ENCODE measurements at regions of chr4 and their contacts with region 1.

Region 1: GRCh38 chr4:145234091-145234706 is 53.8 kb upstream of the OTUD4 start:
- DNase-seq: peak; percentile 58
- H3K4me3 ChIP-seq: no peak overlapping the region
- H3K27ac ChIP-seq: no peak overlapping the region
- H3K4me1 ChIP-seq: no peaks in the 10 kb centered on the region
- H3K27me3 ChIP-seq: no peaks in the 10 kb centered on the region
- CTCF ChIP-seq: peak; percentile 19 to 78 (median 68)
- POLR2A ChIP-seq: no peak

Region 2: GRCh38 chr4:145557720-145558119 is 323.5 kb after region 1 on chr4:
- intact Hi-C with region 1: loop called (anchors 5 kb)
- DNase-seq: peak; percentile 46
- H3K4me3 ChIP-seq: no peak overlapping the region
- H3K27ac ChIP-seq: no peak overlapping the region
- H3K4me1 ChIP-seq: no peaks in the 10 kb centered on the region
- H3K27me3 ChIP-seq: no peaks in the 10 kb centered on the region
- CTCF ChIP-seq: peak; percentile 47 to 80 (median 74)
- POLR2A ChIP-seq: no peak

Region 3: DNA sequence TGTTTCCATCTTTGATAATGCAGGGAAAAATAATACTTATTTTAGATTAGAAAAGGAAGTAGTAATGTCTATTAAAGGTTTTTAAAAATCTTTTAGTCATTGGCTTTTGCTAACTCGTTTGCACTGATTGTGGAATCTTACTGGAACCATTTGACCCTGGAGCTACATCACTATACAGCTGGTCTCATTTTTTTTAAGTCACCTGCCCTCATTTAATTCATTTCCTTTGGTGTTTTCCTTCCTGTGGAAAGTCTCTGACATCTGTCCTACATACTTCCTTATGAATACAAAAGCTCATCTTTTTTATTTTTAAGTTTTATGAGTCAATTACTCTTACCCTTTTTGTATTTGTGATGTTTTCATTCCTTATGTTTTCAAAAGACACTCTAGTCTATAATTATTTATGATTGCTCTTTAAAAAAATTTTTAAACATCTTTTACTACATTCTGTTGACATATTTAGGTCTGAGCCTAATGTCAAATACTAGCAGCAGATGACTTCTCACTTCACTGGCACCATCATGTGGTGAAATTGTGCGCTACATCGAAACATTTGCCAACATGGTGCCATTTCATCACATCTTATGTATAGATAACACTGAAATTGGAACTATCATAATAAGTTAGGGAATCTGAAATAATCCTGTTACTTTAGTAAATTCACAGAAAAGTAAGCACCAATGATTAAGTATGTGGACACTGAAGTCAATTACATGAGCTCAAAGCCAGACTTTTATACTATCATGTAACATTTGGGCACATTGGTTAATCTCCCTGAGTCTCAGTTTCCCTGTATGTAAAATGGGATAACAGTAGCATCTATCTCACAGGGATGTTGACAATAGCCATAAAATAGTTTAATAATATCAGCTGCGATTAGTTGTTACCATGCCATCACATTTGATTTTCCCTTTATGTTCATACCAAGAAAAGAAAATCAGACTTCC is 375.6 kb after region 1 on chr4:
- intact Hi-C with region 1: loop called (anchors 5 kb)
- DNase-seq: peak; percentile 67
- H3K4me3 ChIP-seq: no peak overlapping the region
- H3K27ac ChIP-seq: no peak overlapping the region
- H3K4me1 ChIP-seq: no peaks in the 10 kb centered on the region
- H3K27me3 ChIP-seq: no peaks in the 10 kb centered on the region
- CTCF ChIP-seq: peak in 3 of 4 experiments; percentile 63 to 77 (median 75)
- POLR2A ChIP-seq: no peak